Activated naive CD4-positive, alpha-beta T cell treated with anti-CD3 and anti-CD28 coated beads, Interleukin-2, amount 10 ng/mL, durations not matched to agents 7 days and 5 days (primary cell): ENCODE measurements at regions of chr1 and their contacts with region 1.

Region 1: DNA sequence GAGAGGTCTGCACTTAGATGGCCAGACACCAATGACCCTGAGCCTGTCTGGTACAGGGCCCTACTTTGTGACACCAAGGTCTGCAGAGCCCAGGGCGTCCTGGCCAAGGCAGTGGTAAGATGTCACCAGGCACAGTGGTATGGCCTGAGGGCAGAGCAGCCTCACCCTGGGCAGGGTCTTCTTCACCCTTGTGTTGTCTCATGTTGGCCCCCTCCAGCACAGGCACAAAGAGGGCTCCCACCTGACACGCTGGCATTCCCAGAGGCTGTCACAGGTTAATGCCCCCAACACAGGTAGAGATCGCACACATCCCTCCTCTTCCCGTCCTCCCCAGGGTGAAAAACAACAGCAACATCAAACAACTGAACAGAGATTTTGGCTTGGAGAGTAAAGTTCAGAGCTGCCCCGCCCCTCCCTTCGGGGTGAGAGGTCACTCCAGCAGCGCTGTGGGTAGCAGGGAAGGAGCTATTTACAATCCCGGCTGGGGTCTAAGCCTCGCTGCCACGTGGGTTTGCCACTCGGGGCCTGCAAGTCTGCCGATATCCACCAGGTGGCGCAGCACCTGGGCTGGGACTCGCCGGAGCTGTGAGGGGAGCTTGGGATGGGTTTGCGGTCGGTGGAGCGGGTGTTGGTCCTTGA is 12.6 kb downstream of the EFNA3 start:
- DNase-seq: peak; percentile 86
- H3K4me3 Mint-ChIP-seq: no peak overlapping the region
- H3K27ac Mint-ChIP-seq: no peak overlapping the region
- H3K4me1 Mint-ChIP-seq: peaks cover 7% of the 10 kb centered on the region
- H3K27me3 Mint-ChIP-seq: peaks cover 57% of the 10 kb centered on the region

Region 2: DNA sequence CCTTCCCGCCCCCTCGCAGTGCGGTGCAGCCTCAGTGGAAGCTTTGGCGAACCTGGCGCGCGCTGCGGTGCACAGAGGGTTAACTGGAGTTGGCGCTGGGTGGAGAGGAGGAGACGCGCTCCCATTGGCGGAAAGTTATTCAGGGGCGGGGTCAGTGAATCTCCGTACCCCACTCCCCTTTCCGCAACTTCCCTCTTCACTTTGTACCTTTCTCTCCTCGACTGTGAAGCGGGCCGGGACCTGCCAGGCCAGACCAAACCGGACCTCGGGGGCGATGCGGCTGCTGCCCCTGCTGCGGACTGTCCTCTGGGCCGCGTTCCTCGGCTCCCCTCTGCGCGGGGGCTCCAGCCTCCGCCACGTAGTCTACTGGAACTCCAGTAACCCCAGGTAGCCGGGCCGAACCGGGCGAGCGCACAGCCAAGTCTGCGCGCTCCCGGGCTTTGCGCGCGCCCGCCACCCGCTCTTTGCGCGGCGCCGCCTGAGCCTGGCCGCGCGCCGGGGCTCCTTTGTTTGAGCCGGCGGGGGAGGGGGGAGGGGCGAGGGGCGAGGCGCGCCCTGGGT is 27.6 kb before region 1 on chr1 and contains the start of gene EFNA4:
- CTCF ChIA-PET with region 1: interaction called, 10 read pairs
- DNase-seq: peak; percentile 93
- H3K4me3 Mint-ChIP-seq: peak within 1 kb of the TSS; percentile 76
- H3K27ac Mint-ChIP-seq: peak within 1 kb of the TSS; percentile 61
- H3K4me1 Mint-ChIP-seq: peaks cover 36% of the 10 kb centered on the region
- H3K27me3 Mint-ChIP-seq: no peaks in the 10 kb centered on the region

Region 3: DNA sequence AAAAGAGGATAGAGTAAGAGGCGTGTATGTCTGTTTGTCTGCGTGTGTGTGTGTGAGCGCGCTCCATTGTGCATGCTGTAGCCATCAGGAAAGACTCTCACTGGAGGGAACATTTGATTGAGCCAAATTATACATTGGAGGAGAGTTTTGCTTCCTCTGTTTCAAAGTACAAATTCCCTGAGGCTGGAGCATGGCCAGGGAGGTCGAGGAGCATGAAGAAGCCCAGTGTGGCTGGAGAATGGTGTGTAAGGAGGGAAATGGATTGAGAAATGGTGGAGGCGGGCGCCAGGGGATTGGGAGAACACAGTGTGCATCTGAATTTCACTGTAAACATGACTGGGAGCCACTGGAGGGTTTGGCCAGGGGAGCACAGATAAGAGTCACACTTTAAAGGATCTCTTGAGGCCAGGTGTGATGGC is 14.4 kb after region 1 on chr1:
- CTCF ChIA-PET with region 1: interaction called, 12 read pairs
- DNase-seq: no peak
- H3K4me3 Mint-ChIP-seq: no peak overlapping the region
- H3K27ac Mint-ChIP-seq: no peak overlapping the region
- H3K4me1 Mint-ChIP-seq: no peaks in the 10 kb centered on the region
- H3K27me3 Mint-ChIP-seq: peaks cover 28% of the 10 kb centered on the region

Region 4: GRCh38 chr1:155196893-155197638 is 105.9 kb after region 1 on chr1:
- CTCF ChIA-PET with region 1: no interaction called
- DNase-seq: no peak
- H3K4me3 Mint-ChIP-seq: no peak overlapping the region
- H3K27ac Mint-ChIP-seq: no peak overlapping the region
- H3K4me1 Mint-ChIP-seq: peaks cover 36% of the 10 kb centered on the region
- H3K27me3 Mint-ChIP-seq: no peaks in the 10 kb centered on the region

Region 5: DNA sequence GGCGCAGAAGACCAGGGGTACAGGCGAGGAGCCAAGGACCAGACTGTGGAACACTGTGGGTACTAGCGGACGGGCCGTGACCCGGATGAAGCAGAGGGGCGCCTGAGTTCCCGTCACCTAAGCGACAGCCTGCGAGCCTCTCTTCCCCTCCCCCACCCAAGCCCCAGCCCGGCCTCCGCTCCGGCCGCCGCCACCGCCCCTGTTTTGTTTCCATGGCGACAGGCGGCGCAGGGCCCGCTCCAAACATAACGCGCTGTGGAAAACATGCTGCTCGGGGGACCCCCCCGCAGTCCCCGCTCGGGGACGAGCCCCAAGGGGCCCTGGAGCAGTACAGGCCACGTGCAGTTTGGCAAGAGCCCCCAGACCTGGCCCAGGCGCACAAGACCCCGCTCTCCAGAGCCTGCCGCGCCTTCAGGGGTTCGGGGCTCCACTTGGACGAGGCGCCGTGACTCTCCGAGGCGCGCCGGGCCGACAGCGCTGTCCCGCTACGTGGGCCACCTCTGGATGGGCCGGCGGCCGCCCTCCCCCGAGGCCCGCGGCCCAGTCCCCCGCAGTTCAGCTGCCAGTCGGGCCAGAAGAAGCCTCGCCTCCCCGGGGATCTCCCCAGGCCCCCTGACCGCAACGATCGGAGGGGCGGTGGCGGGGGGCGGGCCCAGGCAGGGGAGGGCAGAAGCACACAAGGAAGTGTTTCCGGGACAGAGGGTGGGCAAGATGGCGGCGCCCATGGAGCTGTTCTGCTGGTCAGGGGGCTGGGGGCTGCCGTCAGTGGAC is 117.5 kb after region 1 on chr1 and contains the start of gene MTX1:
- CTCF ChIA-PET with region 1: no interaction called
- DNase-seq: peak; percentile 92
- H3K4me3 Mint-ChIP-seq: peak within 1 kb of the TSS; percentile 79
- H3K27ac Mint-ChIP-seq: peak within 1 kb of the TSS; percentile 89
- H3K4me1 Mint-ChIP-seq: peaks cover 29% of the 10 kb centered on the region
- H3K27me3 Mint-ChIP-seq: no peaks in the 10 kb centered on the region